ENCODE measurements at regions of chr7 and their contacts with region 1.

Region 1: GRCh38 chr7:150988230-150989226 is 2.3 kb upstream of the NOS3 start:
- DNase-seq: peak; percentile 83
- ATAC-seq: peak; percentile 78
- H3K4me3 Mint-ChIP-seq: peak overlapping the region; percentile 8
- H3K27ac Mint-ChIP-seq: no peak overlapping the region
- H3K4me1 Mint-ChIP-seq: peaks cover 26% of the 10 kb centered on the region
- H3K27me3 Mint-ChIP-seq: no peaks in the 10 kb centered on the region

Region 2: GRCh38 chr7:150778738-150779301 is 209.7 kb before region 1 on chr7:
- CTCF ChIA-PET with region 1: no interaction called
- POLR2A ChIA-PET with region 1: no interaction called
- intact Hi-C with region 1: loop called (anchors 1 to 2 kb)
- DNase-seq: peak; percentile 88
- ATAC-seq: peak; percentile 75
- H3K4me3 Mint-ChIP-seq: no peak overlapping the region
- H3K27ac Mint-ChIP-seq: no peak overlapping the region
- H3K4me1 Mint-ChIP-seq: peaks cover 4% of the 10 kb centered on the region
- H3K27me3 Mint-ChIP-seq: peaks cover 3% of the 10 kb centered on the region

Region 3: DNA sequence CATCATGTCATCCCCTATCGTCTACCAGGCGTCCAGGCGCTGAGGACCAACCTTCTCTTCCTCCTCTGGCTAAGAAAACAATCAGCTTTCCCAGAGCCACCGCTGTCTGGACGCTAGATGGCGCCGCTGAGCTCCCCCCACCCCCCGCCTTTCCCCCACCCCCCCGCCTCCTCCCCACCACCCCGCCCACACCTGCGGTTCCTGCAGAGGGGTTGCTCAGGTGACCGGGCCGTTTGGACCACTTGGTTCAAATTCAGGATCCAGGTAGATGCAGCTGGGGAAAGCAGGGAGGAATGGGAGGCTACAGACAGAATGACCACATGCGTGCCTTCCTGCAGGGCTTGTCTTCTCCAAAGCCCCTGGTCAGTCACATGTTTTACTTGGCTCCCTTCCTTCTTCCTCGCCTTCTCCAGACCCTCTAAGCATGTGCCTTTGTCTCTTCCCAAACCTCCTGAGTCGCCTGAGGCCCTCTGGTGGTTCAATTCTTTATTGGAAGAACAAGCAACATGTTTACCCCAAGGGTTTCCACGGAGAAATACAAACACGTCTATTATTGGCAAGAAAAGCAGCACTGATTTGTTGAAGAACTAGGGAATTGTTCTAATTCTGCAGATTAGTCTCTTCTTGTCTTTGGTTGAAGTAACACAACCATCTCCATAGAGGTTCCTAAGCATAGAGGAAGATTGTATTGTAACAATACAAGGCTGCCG is 111.6 kb before region 1 on chr7:
- CTCF ChIA-PET with region 1: interaction called, 5 read pairs
- POLR2A ChIA-PET with region 1: no interaction called
- intact Hi-C with region 1: loop called (anchors 5 kb)
- DNase-seq: peak; percentile 76
- ATAC-seq: peak; percentile 71
- H3K4me3 Mint-ChIP-seq: no peak overlapping the region
- H3K27ac Mint-ChIP-seq: no peak overlapping the region
- H3K4me1 Mint-ChIP-seq: peaks cover 11% of the 10 kb centered on the region
- H3K27me3 Mint-ChIP-seq: peaks cover 9% of the 10 kb centered on the region

Region 4: DNA sequence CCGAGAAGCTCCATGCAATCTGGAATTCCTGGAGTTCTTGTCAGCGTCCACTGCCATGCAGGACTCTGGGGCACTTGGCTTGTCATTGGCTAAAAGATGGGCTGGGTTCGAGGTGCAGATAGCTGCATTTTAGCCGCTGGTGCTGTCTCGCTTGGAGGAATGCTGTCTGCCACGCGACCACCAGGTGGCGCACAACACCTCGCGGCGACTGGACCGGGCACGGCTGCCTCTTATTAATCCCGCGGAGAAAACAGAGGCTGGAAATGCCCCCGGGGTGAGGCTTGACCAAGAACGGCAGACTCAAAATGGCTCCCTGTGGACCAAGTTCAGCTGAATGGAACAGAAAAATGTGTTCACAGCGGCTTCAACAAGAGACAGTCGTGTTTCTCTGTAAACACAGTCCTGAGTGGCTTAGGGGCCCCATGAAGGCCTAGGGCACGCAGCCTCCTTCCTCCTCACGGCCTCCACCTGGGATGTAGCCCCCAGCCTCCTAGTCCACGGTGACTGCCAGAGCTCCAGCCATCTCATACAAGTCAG is 90.0 kb before region 1 on chr7:
- CTCF ChIA-PET with region 1: interaction called, 47 read pairs
- POLR2A ChIA-PET with region 1: no interaction called
- intact Hi-C with region 1: loop called (anchors 1 kb)
- DNase-seq: peak; percentile 89
- ATAC-seq: peak; percentile 86
- H3K4me3 Mint-ChIP-seq: no peak overlapping the region
- H3K27ac Mint-ChIP-seq: peak overlapping the region; percentile 15
- H3K4me1 Mint-ChIP-seq: peaks cover 12% of the 10 kb centered on the region
- H3K27me3 Mint-ChIP-seq: peaks cover 31% of the 10 kb centered on the region

Region 5: GRCh38 chr7:150962553-150963399 is 25.8 kb before region 1 on chr7:
- CTCF ChIA-PET with region 1: interaction called, 35 read pairs
- POLR2A ChIA-PET with region 1: no interaction called
- intact Hi-C with region 1: loop called (anchors 1 kb)
- DNase-seq: peak; percentile 78
- ATAC-seq: peak; percentile 93
- H3K4me3 Mint-ChIP-seq: no peak overlapping the region
- H3K27ac Mint-ChIP-seq: no peak overlapping the region
- H3K4me1 Mint-ChIP-seq: peaks cover 18% of the 10 kb centered on the region
- H3K27me3 Mint-ChIP-seq: peaks cover 21% of the 10 kb centered on the region

Region 6: DNA sequence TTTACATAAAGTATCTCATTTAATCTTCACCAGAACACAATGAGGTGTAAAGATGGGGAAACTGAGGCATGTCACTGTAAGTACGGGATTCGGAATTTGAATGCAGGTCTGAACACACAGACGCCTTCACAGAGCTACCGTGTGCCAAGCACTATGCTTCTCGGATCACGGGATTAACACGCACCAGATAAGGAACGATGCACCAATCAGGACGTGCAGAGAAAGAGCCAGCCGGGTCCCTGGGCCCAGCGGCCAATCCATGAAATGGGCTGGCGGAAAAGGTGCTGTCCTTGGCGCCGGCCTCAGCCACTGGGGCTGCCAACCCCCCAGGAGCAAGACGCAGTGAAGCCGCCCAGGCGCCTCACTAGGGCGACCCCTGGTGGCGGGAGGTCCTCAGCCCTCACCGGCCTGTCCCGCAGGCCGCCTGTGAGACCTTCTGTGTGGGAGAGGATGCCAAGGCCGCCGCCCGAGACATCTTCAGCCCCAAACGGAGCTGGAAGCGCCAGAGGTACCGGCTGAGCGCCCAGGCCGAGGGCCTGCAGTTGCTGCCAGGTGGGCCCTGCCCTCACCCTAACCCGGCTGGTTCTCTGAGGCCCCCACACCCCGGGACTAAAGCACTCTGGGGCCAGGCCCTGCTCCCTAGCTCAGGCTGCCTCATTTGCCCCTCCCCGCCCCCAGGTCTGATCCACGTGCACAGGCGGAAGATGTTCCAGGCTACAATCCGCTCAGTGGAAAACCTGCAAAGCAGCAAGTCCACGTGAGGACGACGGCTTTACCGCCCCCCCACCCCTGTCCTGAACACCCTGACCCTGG is 20.2 kb after region 1 on chr7:
- CTCF ChIA-PET with region 1: interaction called, 35 read pairs
- POLR2A ChIA-PET with region 1: no interaction called
- intact Hi-C with region 1: no loop called
- DNase-seq: peak; percentile 89
- ATAC-seq: peak; percentile 67
- H3K4me3 Mint-ChIP-seq: peak overlapping the region; percentile 55
- H3K27ac Mint-ChIP-seq: peak overlapping the region; percentile 59
- H3K4me1 Mint-ChIP-seq: peaks cover 53% of the 10 kb centered on the region
- H3K27me3 Mint-ChIP-seq: no peaks in the 10 kb centered on the region

Measured in activated CD4-positive, alpha-beta T cell treated with anti-CD3 and anti-CD28 coated beads for 36 hours (primary cell).